Activated CD4-positive, alpha-beta T cell treated with anti-CD3 and anti-CD28 coated beads for 36 hours (primary cell): ENCODE measurements at regions of chr18 and their contacts with region 1.

Region 1: GRCh38 chr18:4789506-4789905 is 334.4 kb upstream of the DLGAP1 start:
- DNase-seq: no peak
- ATAC-seq: no peak
- H3K4me3 Mint-ChIP-seq: no peak overlapping the region
- H3K27ac Mint-ChIP-seq: no peak overlapping the region
- H3K4me1 Mint-ChIP-seq: no peaks in the 10 kb centered on the region
- H3K27me3 Mint-ChIP-seq: no peaks in the 10 kb centered on the region

Region 2: DNA sequence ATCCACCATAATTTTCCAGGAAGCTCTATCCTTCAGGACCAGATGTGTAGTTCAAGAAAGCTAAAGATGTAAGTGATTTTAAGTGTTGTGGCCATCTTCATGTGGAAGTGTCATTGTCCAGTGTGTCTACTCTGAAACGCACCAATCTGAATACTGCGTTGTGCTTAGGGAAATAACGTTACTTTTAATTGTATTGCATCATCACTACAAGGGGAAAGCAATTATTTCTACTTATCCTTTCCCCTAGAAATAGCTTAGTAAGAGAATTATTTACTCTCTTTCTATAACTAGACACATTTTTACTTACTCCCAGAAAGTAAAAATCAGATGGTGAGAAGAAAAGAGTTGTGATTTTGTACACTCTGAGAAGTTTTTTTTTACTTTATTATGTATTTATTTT is 232.0 kb before region 1 on chr18:
- CTCF ChIA-PET with region 1: no interaction called
- POLR2A ChIA-PET with region 1: no interaction called
- intact Hi-C with region 1: no loop called
- DNase-seq: no peak
- ATAC-seq: no peak
- H3K4me3 Mint-ChIP-seq: no peak overlapping the region
- H3K27ac Mint-ChIP-seq: no peak overlapping the region
- H3K4me1 Mint-ChIP-seq: no peaks in the 10 kb centered on the region
- H3K27me3 Mint-ChIP-seq: no peaks in the 10 kb centered on the region

Region 3: GRCh38 chr18:4765401-4765800 is 24.1 kb before region 1 on chr18:
- CTCF ChIA-PET with region 1: no interaction called
- POLR2A ChIA-PET with region 1: no interaction called
- intact Hi-C with region 1: loop called in 1 of 2 experiments (anchors 2 kb)
- DNase-seq: no peak
- ATAC-seq: no peak
- H3K4me3 Mint-ChIP-seq: no peak overlapping the region
- H3K27ac Mint-ChIP-seq: no peak overlapping the region
- H3K4me1 Mint-ChIP-seq: no peaks in the 10 kb centered on the region
- H3K27me3 Mint-ChIP-seq: no peaks in the 10 kb centered on the region